Esophagus squamous epithelium (tissue), 5 donors: ENCODE measurements at regions of chr17 and their contacts with region 1.

Region 1: GRCh38 chr17:82917691-82918345 is 78.0 kb upstream of the ZNF750 start:
- DNase-seq: no peak
- H3K4me3 ChIP-seq: no peak overlapping the region
- H3K27ac ChIP-seq: no peak overlapping the region
- H3K4me1 ChIP-seq: peaks cover 0 to 14% (median 3%) of the 10 kb centered on the region in 3 donors
- H3K27me3 ChIP-seq: no peaks in the 10 kb centered on the region
- CTCF ChIP-seq: peak in 3 of 6 experiments; percentile 20 to 37 (median 31)
- POLR2A ChIP-seq: no peak

Region 2: GRCh38 chr17:82781894-82782274 is 135.9 kb before region 1 on chr17:
- intact Hi-C with region 1: loop called (anchors 10 kb)
- DNase-seq: peak; percentile 42
- H3K4me3 ChIP-seq: peak overlapping the region in 1 of 4 donors; percentile 28
- H3K27ac ChIP-seq: peak overlapping the region in 3 of 4 donors; percentile 39 to 62 (median 52)
- H3K4me1 ChIP-seq: peaks cover 9 to 49% (median 14%) of the 10 kb centered on the region in 3 donors
- H3K27me3 ChIP-seq: no peaks in the 10 kb centered on the region
- CTCF ChIP-seq: peak; percentile 94 to 99 (median 98)
- POLR2A ChIP-seq: no peak